Activated naive CD4-positive, alpha-beta T cell treated with anti-CD3 and anti-CD28 coated beads for 36 hours (primary cell): ENCODE measurements at regions of chr10 and their contacts with region 1.

Region 1: GRCh38 chr10:60760749-60761148 is 17.5 kb upstream of the CDK1 start:
- DNase-seq: no peak
- H3K4me3 Mint-ChIP-seq: no peak overlapping the region
- H3K27ac Mint-ChIP-seq: no peak overlapping the region
- H3K4me1 Mint-ChIP-seq: no peaks in the 10 kb centered on the region
- H3K27me3 Mint-ChIP-seq: no peaks in the 10 kb centered on the region

Region 2: DNA sequence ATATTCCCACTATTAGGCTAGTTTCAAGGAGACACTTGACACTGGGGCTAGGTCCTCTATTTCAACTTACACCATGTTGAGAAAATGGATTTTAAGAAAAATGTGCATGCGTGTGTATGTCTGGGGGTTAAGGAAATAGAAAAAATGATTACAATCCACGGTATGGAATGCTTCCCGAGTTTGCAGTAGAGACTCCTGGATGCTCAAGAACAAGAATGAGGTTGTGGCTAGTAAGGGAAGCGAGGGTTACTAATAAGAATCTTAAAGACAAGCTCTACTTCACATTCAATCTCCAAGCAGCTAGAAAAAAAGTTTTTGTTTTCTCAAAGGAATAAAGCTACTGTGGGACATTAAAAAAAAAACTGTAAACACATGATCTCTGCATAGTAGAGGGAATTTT is 425.8 kb before region 1 on chr10:
- CTCF ChIA-PET with region 1: no interaction called
- intact Hi-C with region 1: no loop called
- DNase-seq: no peak
- H3K4me3 Mint-ChIP-seq: no peak overlapping the region
- H3K27ac Mint-ChIP-seq: no peak overlapping the region
- H3K4me1 Mint-ChIP-seq: no peaks in the 10 kb centered on the region
- H3K27me3 Mint-ChIP-seq: no peaks in the 10 kb centered on the region

Region 3: GRCh38 chr10:60549686-60550085 is 211.1 kb before region 1 on chr10:
- CTCF ChIA-PET with region 1: no interaction called
- intact Hi-C with region 1: loop called (anchors 2 kb)
- DNase-seq: no peak
- H3K4me3 Mint-ChIP-seq: no peak overlapping the region
- H3K27ac Mint-ChIP-seq: no peak overlapping the region
- H3K4me1 Mint-ChIP-seq: peaks cover 1% of the 10 kb centered on the region
- H3K27me3 Mint-ChIP-seq: no peaks in the 10 kb centered on the region

Region 4: GRCh38 chr10:60564475-60564874 is 196.3 kb before region 1 on chr10:
- CTCF ChIA-PET with region 1: no interaction called
- intact Hi-C with region 1: no loop called
- DNase-seq: no peak
- H3K4me3 Mint-ChIP-seq: no peak overlapping the region
- H3K27ac Mint-ChIP-seq: no peak overlapping the region
- H3K4me1 Mint-ChIP-seq: peaks cover 28% of the 10 kb centered on the region
- H3K27me3 Mint-ChIP-seq: no peaks in the 10 kb centered on the region

Region 5: DNA sequence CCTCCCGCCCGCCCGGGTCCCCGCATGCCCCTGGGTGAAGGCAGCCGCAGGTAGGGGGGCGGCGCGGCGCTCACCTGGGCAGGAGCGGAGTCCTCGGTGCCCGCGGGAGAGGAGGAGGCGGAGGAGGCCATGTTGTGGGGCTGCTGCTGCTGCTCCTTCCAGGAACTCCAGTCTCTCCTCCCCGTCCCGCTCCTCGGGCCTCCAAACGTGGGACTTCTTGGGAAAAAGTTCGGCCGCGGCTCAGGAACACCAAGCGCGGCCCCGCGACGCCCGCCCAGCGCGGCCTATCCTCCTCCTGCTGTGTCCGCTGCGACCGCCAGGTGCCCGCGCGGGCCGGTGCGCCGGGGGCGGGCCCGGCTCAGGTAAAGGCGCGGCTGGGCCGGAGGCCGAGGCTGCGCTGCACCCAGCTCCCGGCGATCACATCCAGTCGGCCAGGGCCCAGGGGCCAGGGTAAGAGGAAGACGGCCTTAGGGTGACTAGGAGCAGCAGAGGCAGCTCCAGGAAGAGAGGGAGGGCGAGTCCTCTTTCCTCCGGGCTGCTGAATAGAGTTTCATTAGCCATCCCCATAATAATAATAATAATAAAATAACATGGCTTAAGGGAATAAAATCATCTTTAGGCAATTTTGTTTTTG is 27.4 kb before region 1 on chr10:
- CTCF ChIA-PET with region 1: no interaction called
- intact Hi-C with region 1: loop called (anchors 2 kb)
- DNase-seq: peak; percentile 39
- H3K4me3 Mint-ChIP-seq: peak overlapping the region; percentile 84
- H3K27ac Mint-ChIP-seq: no peak overlapping the region
- H3K4me1 Mint-ChIP-seq: peaks cover 32% of the 10 kb centered on the region
- H3K27me3 Mint-ChIP-seq: peaks cover 4% of the 10 kb centered on the region

Region 6: GRCh38 chr10:60778214-60779029 is 17.7 kb after region 1 on chr10 and contains the start of gene CDK1:
- CTCF ChIA-PET with region 1: no interaction called
- intact Hi-C with region 1: no loop called
- DNase-seq: peak; percentile 98
- H3K4me3 Mint-ChIP-seq: peak within 1 kb of the TSS; percentile 99
- H3K27ac Mint-ChIP-seq: peak within 1 kb of the TSS; percentile 97
- H3K4me1 Mint-ChIP-seq: peaks cover 21% of the 10 kb centered on the region
- H3K27me3 Mint-ChIP-seq: no peaks in the 10 kb centered on the region
- total RNA-seq, gene CDK1: 173 to 180 TPM

Region 7: DNA sequence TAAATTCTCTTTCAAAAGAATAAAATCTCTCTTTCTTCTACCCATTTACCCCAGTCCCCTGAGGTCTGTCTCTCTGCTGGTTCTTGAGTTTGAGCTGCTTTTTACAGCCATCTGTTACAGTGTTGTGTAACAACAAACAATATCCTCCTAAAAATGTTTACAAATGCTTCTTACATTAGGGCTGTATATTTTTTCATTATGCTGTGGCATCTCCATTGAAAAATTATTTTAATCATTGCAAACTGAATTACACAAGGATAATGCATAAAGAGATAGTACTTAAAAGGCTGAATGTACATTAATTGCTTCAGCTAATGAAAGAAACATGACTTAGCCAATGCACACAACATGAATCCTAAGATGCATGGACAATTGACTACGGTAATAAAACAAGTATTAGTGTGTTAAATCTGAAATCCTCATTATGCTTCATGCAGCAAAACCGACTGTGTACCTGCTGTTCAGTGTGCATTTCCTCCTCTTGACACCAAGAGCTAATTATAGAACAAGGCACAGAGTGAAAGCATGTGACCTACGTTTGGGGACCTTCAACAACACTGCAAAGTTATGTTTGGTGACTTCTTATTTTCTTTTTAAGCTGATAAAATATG is 364.9 kb after region 1 on chr10:
- CTCF ChIA-PET with region 1: no interaction called
- intact Hi-C with region 1: no loop called
- DNase-seq: no peak
- H3K4me3 Mint-ChIP-seq: no peak overlapping the region
- H3K27ac Mint-ChIP-seq: no peak overlapping the region
- H3K4me1 Mint-ChIP-seq: peaks cover 3% of the 10 kb centered on the region
- H3K27me3 Mint-ChIP-seq: peaks cover 1% of the 10 kb centered on the region